ENCODE measurements at regions of chr3 and their contacts with region 1.

Region 1: DNA sequence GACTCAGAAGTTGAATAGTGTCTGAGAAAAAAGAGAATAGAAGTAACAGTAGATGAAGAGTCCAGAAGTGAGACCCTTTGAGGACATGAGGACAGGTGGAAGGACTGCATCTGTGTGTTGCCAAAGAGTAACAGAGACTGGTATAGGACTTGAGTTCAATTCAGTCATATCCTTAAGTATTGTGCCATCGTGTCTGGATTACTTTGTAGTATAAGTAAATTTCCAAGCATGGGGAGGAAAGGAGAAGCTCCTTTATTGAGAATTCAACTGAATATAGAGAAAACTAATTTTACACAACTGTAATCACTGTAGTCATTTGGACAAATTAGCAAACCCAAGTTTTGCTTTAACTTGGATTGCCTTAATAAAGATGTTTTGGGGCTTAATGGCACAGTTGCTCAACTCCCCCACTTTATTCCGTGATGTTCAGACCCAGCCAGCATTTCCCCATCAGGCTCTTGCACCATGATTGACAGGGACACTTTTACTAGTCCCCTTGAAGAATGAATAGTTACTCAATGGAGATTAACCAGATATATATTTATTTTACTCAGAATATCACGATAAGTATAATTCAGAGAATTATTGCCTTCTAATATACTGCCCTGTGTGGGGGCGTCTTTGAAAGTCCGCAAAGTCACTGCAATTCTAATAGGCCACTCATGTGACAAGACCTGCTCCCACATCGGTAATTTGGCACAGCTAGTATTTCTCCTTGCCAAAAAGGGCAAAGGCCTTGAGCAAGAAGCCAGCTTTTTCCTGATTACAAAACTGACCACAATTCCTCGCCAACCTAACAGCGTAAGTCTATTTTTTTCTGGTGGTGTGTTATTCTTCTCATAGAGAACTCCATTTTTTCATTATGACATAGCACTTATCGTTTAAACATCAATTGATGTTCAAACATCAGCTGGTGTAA is 61.3 kb downstream of the PPARG start:
- DNase-seq: no peak
- H3K4me3 Mint-ChIP-seq: no peak overlapping the region
- H3K27ac Mint-ChIP-seq: no peak overlapping the region
- H3K4me1 Mint-ChIP-seq: peaks cover 5% of the 10 kb centered on the region
- H3K27me3 Mint-ChIP-seq: peaks cover 10% of the 10 kb centered on the region

Region 2: GRCh38 chr3:12415014-12415680 is 65.0 kb after region 1 on chr3:
- intact Hi-C with region 1: loop called (anchors 5 kb)
- DNase-seq: no peak
- H3K4me3 Mint-ChIP-seq: no peak overlapping the region
- H3K27ac Mint-ChIP-seq: peak overlapping the region; percentile 13
- H3K4me1 Mint-ChIP-seq: peaks cover 7% of the 10 kb centered on the region
- H3K27me3 Mint-ChIP-seq: peaks cover 2% of the 10 kb centered on the region

Region 3: GRCh38 chr3:12462159-12462947 is 112.2 kb after region 1 on chr3:
- intact Hi-C with region 1: no loop called
- DNase-seq: no peak
- H3K4me3 Mint-ChIP-seq: no peak overlapping the region
- H3K27ac Mint-ChIP-seq: no peak overlapping the region
- H3K4me1 Mint-ChIP-seq: peaks cover 6% of the 10 kb centered on the region
- H3K27me3 Mint-ChIP-seq: no peaks in the 10 kb centered on the region